ENCODE measurements at regions of chr17 and their contacts with region 1.

Region 1: GRCh38 chr17:67376737-67377487 is at the start of gene PITPNC1:
- DNase-seq: peak; percentile 79 to 89 (median 88)
- ATAC-seq: peak; percentile 82
- H3K4me3 ChIP-seq: peak within 1 kb of the TSS; percentile 92
- H3K4me3 Mint-ChIP-seq: peak within 1 kb of the TSS; percentile 86 to 99 (median 93)
- H3K27ac ChIP-seq: peak within 1 kb of the TSS; percentile 86
- H3K27ac Mint-ChIP-seq: peak within 1 kb of the TSS; percentile 84 to 98 (median 92)
- H3K4me1 ChIP-seq: peaks cover 17 to 33% of the 10 kb centered on the region in 2 donors
- H3K4me1 Mint-ChIP-seq: peaks cover 26 to 49% (median 38%) of the 10 kb centered on the region in 7 donors
- H3K27me3 ChIP-seq: no peaks in the 10 kb centered on the region
- H3K27me3 Mint-ChIP-seq: no peaks in the 10 kb centered on the region
- total RNA-seq, gene PITPNC1: 53.1 to 108 (median 99.6) TPM

Region 2: DNA sequence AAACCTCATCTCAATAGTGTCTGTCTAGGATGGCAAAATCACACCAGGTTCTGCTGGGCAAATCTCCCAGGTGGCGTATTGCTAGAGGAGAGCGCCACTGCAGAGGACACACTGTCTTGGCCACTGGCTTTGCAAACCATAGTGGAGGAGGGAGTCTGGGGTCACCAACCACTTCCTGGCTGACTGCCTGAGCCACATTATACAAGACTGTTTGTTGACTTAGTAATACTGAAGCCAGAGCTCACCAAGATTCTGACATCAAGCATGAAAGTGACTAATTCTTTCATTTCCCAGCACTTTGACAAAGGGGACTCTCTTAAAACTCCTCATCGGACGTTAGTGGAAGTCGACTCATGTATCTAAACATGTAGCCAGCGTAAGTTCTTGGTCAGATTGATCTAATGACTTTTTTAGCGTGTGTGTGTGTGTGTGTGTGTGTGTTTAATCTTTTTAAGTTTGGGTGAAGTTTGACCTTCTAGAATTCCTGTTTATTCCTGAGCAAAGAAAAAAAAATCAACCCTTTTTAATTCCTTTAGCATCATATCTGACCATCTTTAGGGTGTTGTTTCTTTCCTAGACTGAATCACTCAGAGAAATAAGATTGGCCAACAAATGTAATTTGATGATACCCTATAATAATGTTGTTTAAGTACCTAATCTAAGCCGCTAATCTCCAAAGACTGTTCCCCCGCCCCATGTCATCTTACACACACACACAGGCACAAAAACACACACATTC is 13.9 kb after region 1 on chr17:
- CTCF ChIA-PET with region 1: interaction called, 32 read pairs
- POLR2A ChIA-PET with region 1: interaction called, 34 read pairs
- intact Hi-C with region 1: loop called (anchors 1 kb)
- DNase-seq: peak in 6 of 9 donors; percentile 50 to 74 (median 62)
- ATAC-seq: peak; percentile 89
- H3K4me3 ChIP-seq: peak overlapping the region; percentile 34
- H3K4me3 Mint-ChIP-seq: peak overlapping the region; percentile 66 to 90 (median 84)
- H3K27ac ChIP-seq: peak overlapping the region; percentile 76
- H3K27ac Mint-ChIP-seq: peak overlapping the region; percentile 85 to 99 (median 95)
- H3K4me1 ChIP-seq: peaks cover 29 to 46% of the 10 kb centered on the region in 2 donors
- H3K4me1 Mint-ChIP-seq: peaks cover 47 to 95% (median 73%) of the 10 kb centered on the region in 7 donors
- H3K27me3 ChIP-seq: no peaks in the 10 kb centered on the region
- H3K27me3 Mint-ChIP-seq: no peaks in the 10 kb centered on the region

Region 3: DNA sequence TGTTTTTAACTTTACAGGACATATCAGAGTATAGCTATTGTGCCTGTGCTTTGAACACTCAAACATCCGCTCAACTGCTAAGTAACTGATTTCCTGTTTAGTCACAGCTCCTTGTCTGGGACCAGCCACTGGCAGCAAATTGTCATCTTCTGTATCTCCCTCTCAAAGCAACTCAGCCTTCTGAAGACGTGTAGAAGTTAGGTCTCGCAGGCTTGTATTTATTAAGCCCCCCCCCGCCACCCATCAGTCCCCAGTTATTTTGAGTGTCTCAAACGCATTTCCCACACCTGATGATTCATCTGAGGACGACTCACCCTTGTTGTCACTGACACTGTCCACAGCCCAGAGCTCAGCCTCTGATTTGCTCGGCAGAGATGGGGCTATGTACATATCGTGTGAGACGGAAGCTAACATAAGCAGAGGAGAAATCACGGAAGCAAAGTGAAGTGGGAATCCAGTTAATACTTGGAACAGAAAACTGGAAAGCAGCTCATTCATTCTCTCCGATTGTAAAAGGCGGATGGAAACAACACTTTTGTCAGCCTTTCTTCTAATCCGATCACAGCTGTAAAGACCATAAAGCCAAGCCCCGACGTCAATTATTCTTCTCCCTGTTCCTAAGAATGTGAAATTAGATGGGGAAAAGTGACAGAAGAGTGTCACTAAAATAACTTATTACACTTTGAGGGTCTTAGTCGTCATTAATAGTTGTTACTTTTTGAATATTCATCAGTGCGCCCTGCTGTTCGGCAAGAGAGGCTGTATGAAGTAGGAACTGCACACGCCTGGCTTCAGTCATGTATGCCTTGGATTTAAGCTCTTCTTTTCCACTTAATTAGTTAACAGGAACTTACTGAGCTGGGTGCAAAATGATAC is 64.4 kb after region 1 on chr17:
- CTCF ChIA-PET with region 1: interaction called, 21 read pairs
- POLR2A ChIA-PET with region 1: interaction called, 60 read pairs
- intact Hi-C with region 1: loop called in 1 of 2 experiments (anchors 1 kb)
- DNase-seq: peak; percentile 30 to 90 (median 87)
- ATAC-seq: peak; percentile 94
- H3K4me3 ChIP-seq: peak overlapping the region; percentile 64
- H3K4me3 Mint-ChIP-seq: peak overlapping the region; percentile 75 to 88 (median 84)
- H3K27ac ChIP-seq: peak overlapping the region; percentile 93
- H3K27ac Mint-ChIP-seq: peak overlapping the region; percentile 95 to 100 (median 99)
- H3K4me1 ChIP-seq: peaks cover 66 to 87% of the 10 kb centered on the region in 2 donors
- H3K4me1 Mint-ChIP-seq: peaks cover 63 to 98% (median 90%) of the 10 kb centered on the region in 7 donors
- H3K27me3 ChIP-seq: no peaks in the 10 kb centered on the region
- H3K27me3 Mint-ChIP-seq: no peaks in the 10 kb centered on the region

Region 4: DNA sequence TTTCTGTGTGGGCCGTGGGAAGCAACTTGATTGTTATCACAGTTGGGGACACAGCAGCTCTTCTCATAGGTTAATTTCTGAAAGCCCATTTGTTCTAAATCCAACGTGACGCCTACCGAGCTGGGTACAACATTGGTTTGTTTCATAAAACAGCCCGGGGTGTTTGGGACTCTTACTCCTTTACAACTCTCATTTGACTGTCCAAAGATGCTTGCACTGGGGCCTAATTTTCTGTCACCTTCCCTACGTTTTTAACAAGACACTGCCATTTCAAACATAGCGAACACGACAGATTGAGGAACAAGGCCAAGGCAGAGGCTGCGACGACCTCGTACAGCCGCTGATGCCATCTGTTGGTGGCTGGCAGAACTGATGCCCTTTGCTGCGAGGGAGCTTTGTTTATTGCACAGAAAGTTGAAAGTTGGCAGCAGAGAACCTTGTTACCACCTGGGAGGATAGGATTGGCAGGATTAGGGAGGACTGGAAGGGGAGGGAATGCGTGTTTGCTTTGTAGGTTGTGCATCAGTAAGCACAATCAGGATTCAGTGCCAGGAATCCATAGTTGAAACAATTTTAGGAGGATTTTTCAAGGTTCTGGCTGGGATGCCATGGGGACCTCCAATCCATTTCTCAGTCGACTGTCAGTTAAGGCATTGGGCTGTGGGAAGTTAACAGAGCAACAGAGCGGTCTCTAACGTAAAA is 98.5 kb after region 1 on chr17:
- CTCF ChIA-PET with region 1: interaction called, 180 read pairs
- POLR2A ChIA-PET with region 1: interaction called, 176 read pairs
- intact Hi-C with region 1: loop called (anchors 1 kb)
- DNase-seq: peak; percentile 66 to 89 (median 86)
- ATAC-seq: peak; percentile 93
- H3K4me3 ChIP-seq: peak overlapping the region; percentile 22
- H3K4me3 Mint-ChIP-seq: peak overlapping the region; percentile 60 to 88 (median 84)
- H3K27ac ChIP-seq: peak overlapping the region; percentile 77
- H3K27ac Mint-ChIP-seq: peak overlapping the region; percentile 90 to 99 (median 98)
- H3K4me1 ChIP-seq: peaks cover 44 to 53% of the 10 kb centered on the region in 2 donors
- H3K4me1 Mint-ChIP-seq: peaks cover 37 to 85% (median 65%) of the 10 kb centered on the region in 7 donors
- H3K27me3 ChIP-seq: no peaks in the 10 kb centered on the region
- H3K27me3 Mint-ChIP-seq: no peaks in the 10 kb centered on the region

Region 5: DNA sequence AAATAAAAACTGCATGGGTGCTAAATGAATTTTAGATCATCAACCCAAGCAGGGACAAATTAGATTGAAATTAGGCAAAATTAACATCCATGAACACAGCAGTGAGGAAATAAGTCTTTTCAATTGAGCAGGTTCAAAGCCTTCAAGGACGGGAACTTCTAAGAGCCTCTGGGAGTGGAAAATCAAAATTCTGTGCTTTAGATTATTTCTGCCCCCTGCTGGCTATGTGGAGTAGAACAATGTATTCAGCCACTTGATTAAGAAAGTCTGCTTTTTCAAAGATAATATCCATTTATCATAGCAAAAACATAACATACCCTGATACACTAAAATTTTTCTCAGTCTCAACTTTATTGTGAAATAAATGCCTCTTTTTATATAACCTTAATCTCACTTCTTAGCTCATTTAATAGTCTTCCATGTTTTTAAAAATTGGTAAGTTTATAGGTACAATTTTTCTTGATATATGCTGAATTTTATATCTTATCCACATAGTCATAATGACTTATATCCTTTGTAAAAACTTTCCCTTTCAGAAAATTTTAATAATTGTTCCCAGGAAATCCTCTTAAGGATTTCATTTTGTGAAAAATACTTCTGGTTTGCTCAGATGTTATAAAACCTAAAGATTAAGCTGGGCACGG is 312.7 kb after region 1 on chr17:
- CTCF ChIA-PET with region 1: interaction called, 27 read pairs
- POLR2A ChIA-PET with region 1: interaction called, 7 read pairs
- intact Hi-C with region 1: loop called (anchors 1 kb)
- DNase-seq: peak in 8 of 9 donors; percentile 30 to 72 (median 58)
- ATAC-seq: peak; percentile 76
- H3K4me3 ChIP-seq: no peak overlapping the region
- H3K4me3 Mint-ChIP-seq: no peak overlapping the region
- H3K27ac ChIP-seq: no peak overlapping the region
- H3K27ac Mint-ChIP-seq: peak overlapping the region in 1 of 9 donors; percentile 31
- H3K4me1 ChIP-seq: no peaks in the 10 kb centered on the region
- H3K4me1 Mint-ChIP-seq: peaks cover 0 to 7% (median 4%) of the 10 kb centered on the region in 7 donors
- H3K27me3 ChIP-seq: no peaks in the 10 kb centered on the region
- H3K27me3 Mint-ChIP-seq: no peaks in the 10 kb centered on the region

Region 6: DNA sequence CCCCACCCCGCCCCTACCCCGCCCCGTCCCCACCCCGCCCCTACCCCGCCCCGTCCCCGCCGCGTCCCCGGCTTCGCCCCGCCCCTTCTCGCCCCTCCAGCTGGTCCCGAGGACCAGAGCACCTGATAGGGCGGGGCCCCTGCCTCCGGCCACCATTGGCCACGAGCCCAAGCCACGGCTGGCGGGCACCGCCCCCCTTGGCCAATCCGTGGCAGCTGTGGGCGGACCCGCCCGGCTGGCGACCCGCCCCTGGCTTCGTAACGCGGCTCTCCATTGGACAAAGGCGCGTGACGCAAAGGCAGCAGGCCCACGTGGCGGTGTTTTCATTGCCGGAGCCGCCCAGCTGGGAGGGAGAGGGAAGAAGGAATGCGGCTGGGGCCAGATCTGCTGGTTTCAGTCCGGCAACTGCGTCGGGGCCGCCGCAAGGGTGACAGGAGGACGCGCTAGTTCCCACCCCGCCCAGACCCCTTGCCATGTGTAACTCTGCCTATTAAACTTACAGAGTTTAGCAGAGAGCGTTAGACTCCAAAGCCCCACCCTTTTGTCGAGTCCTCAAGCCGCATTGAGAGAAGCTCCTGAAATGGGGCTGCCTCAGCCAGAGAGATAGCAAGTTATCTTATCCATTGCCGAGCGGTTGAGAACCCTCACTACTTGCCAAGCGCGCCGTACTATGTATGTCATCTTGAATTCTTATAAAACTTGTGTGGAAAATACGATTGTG is 1080.8 kb after region 1 on chr17:
- CTCF ChIA-PET with region 1: no interaction called
- POLR2A ChIA-PET with region 1: no interaction called
- intact Hi-C with region 1: loop called in 1 of 2 experiments (anchors 10 kb)
- DNase-seq: peak; percentile 96 to 99 (median 97)
- ATAC-seq: peak; percentile 98
- H3K4me3 ChIP-seq: peak overlapping the region; percentile 52
- H3K4me3 Mint-ChIP-seq: peak overlapping the region; percentile 68 to 87 (median 84)
- H3K27ac ChIP-seq: peak overlapping the region; percentile 73
- H3K27ac Mint-ChIP-seq: peak overlapping the region; percentile 45 to 98 (median 91)
- H3K4me1 ChIP-seq: peaks cover 36 to 52% of the 10 kb centered on the region in 2 donors
- H3K4me1 Mint-ChIP-seq: peaks cover 26 to 66% (median 58%) of the 10 kb centered on the region in 7 donors
- H3K27me3 ChIP-seq: no peaks in the 10 kb centered on the region
- H3K27me3 Mint-ChIP-seq: no peaks in the 10 kb centered on the region

Measured in naive thymus-derived CD4-positive, alpha-beta T cell (primary cell).